ENCODE measurements at regions of chr16 and their contacts with region 1.

Region 1: GRCh38 chr16:56700195-56700594 is 17.9 kb downstream of the MT1X start:
- DNase-seq: no peak
- ATAC-seq: no peak
- H3K4me3 ChIP-seq: no peak overlapping the region
- H3K4me3 Mint-ChIP-seq: no peak overlapping the region
- H3K27ac ChIP-seq: no peak overlapping the region
- H3K27ac Mint-ChIP-seq: no peak overlapping the region
- H3K4me1 ChIP-seq: peaks cover 0 to 4% of the 10 kb centered on the region in 2 donors
- H3K4me1 Mint-ChIP-seq: peaks cover 5% of the 10 kb centered on the region
- H3K27me3 ChIP-seq: peaks cover 0 to 1% (median 0%) of the 10 kb centered on the region in 4 experiments
- H3K27me3 Mint-ChIP-seq: peaks cover 3% of the 10 kb centered on the region
- CTCF ChIP-seq: no peak

Region 2: DNA sequence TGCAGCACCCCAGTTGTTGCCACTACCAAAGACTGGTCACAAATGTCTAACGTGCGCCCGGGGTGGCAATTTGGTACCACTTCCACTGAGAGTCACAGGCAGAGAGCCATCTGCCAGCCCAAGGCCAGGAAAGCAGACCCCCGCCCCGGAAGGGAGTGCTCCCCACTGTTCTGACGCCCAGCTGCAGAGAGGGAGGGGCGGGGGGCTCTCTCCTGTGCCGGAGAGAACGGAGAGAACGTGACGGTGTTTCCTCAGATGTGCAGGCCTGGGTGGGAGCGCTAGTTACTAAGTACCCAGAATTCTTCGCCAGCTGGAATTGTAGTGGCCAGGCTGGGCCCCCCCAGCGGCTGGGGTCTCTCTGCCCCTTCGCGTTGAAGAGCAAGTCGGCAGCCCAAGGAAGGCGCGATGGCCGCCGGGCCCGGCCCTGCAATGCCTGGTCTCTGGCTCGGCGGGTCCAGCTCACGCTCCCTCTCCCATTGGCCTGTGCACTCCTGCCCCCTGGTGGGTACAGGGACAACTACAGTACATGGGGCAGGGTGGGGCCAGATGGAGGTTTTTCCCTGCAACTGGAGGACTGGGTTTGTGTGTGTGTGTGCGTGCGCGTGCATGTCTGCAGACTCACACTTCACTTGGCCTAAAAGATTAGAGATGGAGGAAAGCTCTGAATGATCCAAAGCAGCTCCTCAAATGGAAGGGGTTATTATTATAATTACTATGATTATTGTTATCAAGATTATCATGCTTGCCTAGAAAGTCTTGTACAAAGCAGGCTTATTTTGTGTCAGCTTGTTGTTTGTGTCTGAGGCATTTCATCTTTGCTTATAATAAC is 382.0 kb before region 1 on chr16:
- CTCF ChIA-PET with region 1: interaction called, 8 read pairs
- POLR2A ChIA-PET with region 1: no interaction called
- intact Hi-C with region 1: loop called (anchors 5 kb)
- DNase-seq: peak; percentile 75
- ATAC-seq: peak; percentile 98
- H3K4me3 ChIP-seq: peak overlapping the region in 2 of 5 experiments; percentile 12 to 15
- H3K4me3 Mint-ChIP-seq: peak overlapping the region; percentile 39
- H3K27ac ChIP-seq: no peak overlapping the region
- H3K27ac Mint-ChIP-seq: no peak overlapping the region
- H3K4me1 ChIP-seq: peaks cover 3 to 11% of the 10 kb centered on the region in 2 donors
- H3K4me1 Mint-ChIP-seq: peaks cover 13% of the 10 kb centered on the region
- H3K27me3 ChIP-seq: peaks cover 0 to 5% (median 0%) of the 10 kb centered on the region in 4 experiments
- H3K27me3 Mint-ChIP-seq: peaks cover 9% of the 10 kb centered on the region
- CTCF ChIP-seq: peak; percentile 98

Region 3: DNA sequence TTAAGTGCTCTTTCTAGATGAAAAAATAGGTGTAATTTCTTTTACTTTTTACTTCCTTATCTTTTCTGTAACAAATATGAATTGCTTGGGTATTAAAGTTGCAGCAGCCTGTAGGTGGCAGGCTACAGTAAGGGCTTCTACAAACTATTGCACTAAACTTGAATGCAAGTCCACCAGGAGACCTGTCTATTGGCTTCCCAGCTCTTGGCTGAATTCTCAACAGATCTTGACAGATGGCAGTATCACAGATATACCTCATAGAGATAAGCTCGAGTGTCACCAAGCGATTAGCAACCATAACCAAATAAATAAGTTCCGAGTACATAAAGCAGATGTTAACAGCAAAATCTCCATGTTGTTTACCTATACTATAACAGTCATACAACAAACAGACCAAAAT is 186.2 kb before region 1 on chr16:
- CTCF ChIA-PET with region 1: interaction called, 50 read pairs
- POLR2A ChIA-PET with region 1: interaction called, 3 read pairs
- intact Hi-C with region 1: no loop called
- DNase-seq: peak; percentile 70
- ATAC-seq: peak; percentile 88
- H3K4me3 ChIP-seq: no peak overlapping the region
- H3K4me3 Mint-ChIP-seq: no peak overlapping the region
- H3K27ac ChIP-seq: no peak overlapping the region
- H3K27ac Mint-ChIP-seq: no peak overlapping the region
- H3K4me1 ChIP-seq: peaks cover 0 to 6% of the 10 kb centered on the region in 2 donors
- H3K4me1 Mint-ChIP-seq: peaks cover 36% of the 10 kb centered on the region
- H3K27me3 ChIP-seq: no peaks in the 10 kb centered on the region
- H3K27me3 Mint-ChIP-seq: no peaks in the 10 kb centered on the region
- CTCF ChIP-seq: peak; percentile 77

Region 4: DNA sequence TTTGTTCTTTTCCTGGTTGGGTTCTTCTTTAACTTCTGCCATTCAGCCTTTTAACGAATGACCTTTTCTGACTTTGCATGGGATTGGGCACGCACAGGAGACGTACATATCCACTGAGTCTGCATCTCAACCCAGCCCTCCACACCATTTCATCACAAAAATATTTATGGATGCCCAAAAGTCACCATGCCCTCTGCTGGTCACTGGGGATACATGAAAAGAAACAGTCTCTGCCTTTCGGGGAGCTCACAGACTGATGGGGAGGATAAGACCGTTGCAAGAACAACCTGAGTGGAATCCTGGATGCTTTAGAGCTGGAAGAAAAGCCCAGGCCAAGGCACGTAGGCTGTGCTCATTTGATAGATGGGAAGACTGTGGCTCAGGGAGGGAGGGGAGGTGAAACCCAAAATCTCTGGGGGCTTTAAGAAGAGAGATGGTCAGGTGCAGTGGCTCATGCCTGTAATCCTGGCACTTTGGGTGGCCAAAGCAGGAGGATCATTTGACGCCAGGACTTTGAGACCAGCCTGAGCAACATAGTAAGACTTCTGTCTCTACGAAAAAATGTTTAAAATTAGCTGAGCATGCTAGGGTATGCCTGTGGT is 99.7 kb before region 1 on chr16:
- CTCF ChIA-PET with region 1: interaction called, 18 read pairs
- POLR2A ChIA-PET with region 1: interaction called, 4 read pairs
- intact Hi-C with region 1: no loop called
- DNase-seq: peak; percentile 57
- ATAC-seq: peak; percentile 61
- H3K4me3 ChIP-seq: no peak overlapping the region
- H3K4me3 Mint-ChIP-seq: no peak overlapping the region
- H3K27ac ChIP-seq: no peak overlapping the region
- H3K27ac Mint-ChIP-seq: no peak overlapping the region
- H3K4me1 ChIP-seq: no peaks in the 10 kb centered on the region
- H3K4me1 Mint-ChIP-seq: peaks cover 2% of the 10 kb centered on the region
- H3K27me3 ChIP-seq: peaks cover 0 to 11% (median 3%) of the 10 kb centered on the region in 4 experiments
- H3K27me3 Mint-ChIP-seq: peaks cover 26% of the 10 kb centered on the region
- CTCF ChIP-seq: peak; percentile 62

Region 5: GRCh38 chr16:56673921-56674320 is 26.3 kb before region 1 on chr16:
- CTCF ChIA-PET with region 1: interaction called, 19 read pairs
- POLR2A ChIA-PET with region 1: interaction called, 5 read pairs
- intact Hi-C with region 1: loop called (anchors 1 kb)
- DNase-seq: peak; percentile 47
- ATAC-seq: peak; percentile 41
- H3K4me3 ChIP-seq: no peak overlapping the region
- H3K4me3 Mint-ChIP-seq: no peak overlapping the region
- H3K27ac ChIP-seq: no peak overlapping the region
- H3K27ac Mint-ChIP-seq: no peak overlapping the region
- H3K4me1 ChIP-seq: peaks cover 16 to 17% of the 10 kb centered on the region in 2 donors
- H3K4me1 Mint-ChIP-seq: peaks cover 15% of the 10 kb centered on the region
- H3K27me3 ChIP-seq: peaks cover 0 to 57% (median 26%) of the 10 kb centered on the region in 4 experiments
- H3K27me3 Mint-ChIP-seq: peaks cover 69% of the 10 kb centered on the region
- CTCF ChIP-seq: peak; percentile 39